CD4-positive, alpha-beta memory T cell (primary cell): ENCODE measurements at regions of chr12 and their contacts with region 1.

Region 1: GRCh38 chr12:53005986-53006809 is at the start of gene EIF4B:
- DNase-seq: peak; percentile 97 to 100 (median 100)
- H3K4me3 ChIP-seq: peak within 1 kb of the TSS; percentile 99 to 100
- H3K4me3 Mint-ChIP-seq: peak within 1 kb of the TSS; percentile 99 to 100 (median 99)
- H3K27ac ChIP-seq: peak within 1 kb of the TSS; percentile 94
- H3K27ac Mint-ChIP-seq: peak within 1 kb of the TSS; percentile 99 to 100 (median 99)
- H3K4me1 ChIP-seq: peaks cover 51% of the 10 kb centered on the region
- H3K4me1 Mint-ChIP-seq: peaks cover 26 to 58% (median 43%) of the 10 kb centered on the region in 4 donors
- H3K27me3 ChIP-seq: no peaks in the 10 kb centered on the region
- H3K27me3 Mint-ChIP-seq: no peaks in the 10 kb centered on the region
- total RNA-seq, gene EIF4B: 730 to 777 TPM

Region 2: DNA sequence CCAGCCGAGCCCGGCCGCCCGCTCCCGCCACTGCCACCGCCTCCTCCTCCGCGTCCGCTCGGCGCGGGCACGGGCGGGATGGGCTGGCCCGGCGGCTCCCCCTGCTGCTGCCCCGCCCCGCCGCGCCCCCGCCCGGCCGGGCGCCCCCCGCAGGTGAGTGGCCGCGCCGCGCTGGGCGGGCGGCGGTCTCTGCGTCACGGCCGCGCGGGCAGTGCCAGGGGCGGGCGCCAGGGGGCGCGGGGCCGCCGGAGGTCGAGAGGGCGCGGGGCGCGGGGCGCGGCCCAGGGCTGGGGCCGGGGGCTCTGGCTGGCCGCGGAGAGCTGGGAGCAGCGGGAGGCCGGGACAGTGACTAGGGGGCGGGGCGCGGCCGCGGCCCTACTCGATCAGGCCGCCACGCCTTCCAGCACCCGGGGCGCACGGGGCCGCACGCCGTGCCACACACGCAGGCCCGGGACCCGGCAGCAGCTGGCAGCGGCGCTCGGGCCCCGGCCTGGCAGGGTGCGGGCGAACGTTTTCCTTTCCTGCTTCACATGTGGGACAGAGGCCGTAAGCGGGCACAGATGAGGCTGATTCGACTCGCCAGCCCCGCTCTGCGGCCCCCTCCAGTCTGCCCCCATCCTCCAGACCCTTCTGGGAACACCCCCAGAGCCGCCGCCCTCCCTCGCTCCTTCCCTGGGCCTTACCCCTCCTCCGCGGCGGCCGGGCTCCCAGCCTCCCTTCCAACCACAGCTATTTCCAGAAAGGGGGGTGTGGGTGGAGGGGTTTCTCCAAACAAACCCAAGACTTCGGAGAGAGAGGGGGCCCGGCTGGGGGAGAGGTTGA is 41.2 kb after region 1 on chr12:
- CTCF ChIA-PET with region 1: interaction called, 4 read pairs
- POLR2A ChIA-PET with region 1: interaction called, 22 read pairs
- intact Hi-C with region 1: loop called (anchors 2 kb)
- DNase-seq: peak; percentile 65 to 82 (median 73)
- H3K4me3 ChIP-seq: no peak overlapping the region
- H3K4me3 Mint-ChIP-seq: peak overlapping the region in 7 of 8 donors; percentile 45 to 66 (median 58)
- H3K27ac ChIP-seq: peak overlapping the region; percentile 69
- H3K27ac Mint-ChIP-seq: peak overlapping the region; percentile 25 to 97 (median 68)
- H3K4me1 ChIP-seq: peaks cover 14% of the 10 kb centered on the region
- H3K4me1 Mint-ChIP-seq: peaks cover 5 to 19% (median 12%) of the 10 kb centered on the region in 4 donors
- H3K27me3 ChIP-seq: no peaks in the 10 kb centered on the region
- H3K27me3 Mint-ChIP-seq: no peaks in the 10 kb centered on the region

Region 3: GRCh38 chr12:53079226-53080117 is 73.3 kb after region 1 on chr12 and contains the start of gene SPRYD3:
- CTCF ChIA-PET with region 1: no interaction called
- POLR2A ChIA-PET with region 1: interaction called, 10 read pairs
- intact Hi-C with region 1: no loop called
- DNase-seq: peak; percentile 96 to 99 (median 97)
- H3K4me3 ChIP-seq: peak within 1 kb of the TSS; percentile 73
- H3K4me3 Mint-ChIP-seq: peak within 1 kb of the TSS; percentile 89 to 97 (median 94)
- H3K27ac ChIP-seq: peak within 1 kb of the TSS; percentile 83
- H3K27ac Mint-ChIP-seq: peak within 1 kb of the TSS; percentile 92 to 98 (median 95)
- H3K4me1 ChIP-seq: peaks cover 29% of the 10 kb centered on the region
- H3K4me1 Mint-ChIP-seq: peaks cover 23 to 61% (median 39%) of the 10 kb centered on the region in 4 donors
- H3K27me3 ChIP-seq: no peaks in the 10 kb centered on the region
- H3K27me3 Mint-ChIP-seq: no peaks in the 10 kb centered on the region
- total RNA-seq, gene SPRYD3: 54.3 to 59.3 TPM

Region 4: GRCh38 chr12:53625946-53626701 is 619.9 kb after region 1 on chr12 and contains the start of gene ATF7:
- CTCF ChIA-PET with region 1: no interaction called
- POLR2A ChIA-PET with region 1: no interaction called
- intact Hi-C with region 1: loop called (anchors 1 kb)
- DNase-seq: peak; percentile 97 to 100 (median 98)
- H3K4me3 ChIP-seq: peak within 1 kb of the TSS; percentile 84 to 96
- H3K4me3 Mint-ChIP-seq: peak within 1 kb of the TSS; percentile 98 to 99 (median 98)
- H3K27ac ChIP-seq: peak within 1 kb of the TSS; percentile 83
- H3K27ac Mint-ChIP-seq: peak within 1 kb of the TSS; percentile 89 to 99 (median 98)
- H3K4me1 ChIP-seq: peaks cover 37% of the 10 kb centered on the region
- H3K4me1 Mint-ChIP-seq: peaks cover 35 to 57% (median 46%) of the 10 kb centered on the region in 4 donors
- H3K27me3 ChIP-seq: no peaks in the 10 kb centered on the region
- H3K27me3 Mint-ChIP-seq: no peaks in the 10 kb centered on the region
- total RNA-seq, gene ATF7: 26.8 to 35.8 TPM